ENCODE measurements at regions of chr7 and their contacts with region 1.

Region 1: DNA sequence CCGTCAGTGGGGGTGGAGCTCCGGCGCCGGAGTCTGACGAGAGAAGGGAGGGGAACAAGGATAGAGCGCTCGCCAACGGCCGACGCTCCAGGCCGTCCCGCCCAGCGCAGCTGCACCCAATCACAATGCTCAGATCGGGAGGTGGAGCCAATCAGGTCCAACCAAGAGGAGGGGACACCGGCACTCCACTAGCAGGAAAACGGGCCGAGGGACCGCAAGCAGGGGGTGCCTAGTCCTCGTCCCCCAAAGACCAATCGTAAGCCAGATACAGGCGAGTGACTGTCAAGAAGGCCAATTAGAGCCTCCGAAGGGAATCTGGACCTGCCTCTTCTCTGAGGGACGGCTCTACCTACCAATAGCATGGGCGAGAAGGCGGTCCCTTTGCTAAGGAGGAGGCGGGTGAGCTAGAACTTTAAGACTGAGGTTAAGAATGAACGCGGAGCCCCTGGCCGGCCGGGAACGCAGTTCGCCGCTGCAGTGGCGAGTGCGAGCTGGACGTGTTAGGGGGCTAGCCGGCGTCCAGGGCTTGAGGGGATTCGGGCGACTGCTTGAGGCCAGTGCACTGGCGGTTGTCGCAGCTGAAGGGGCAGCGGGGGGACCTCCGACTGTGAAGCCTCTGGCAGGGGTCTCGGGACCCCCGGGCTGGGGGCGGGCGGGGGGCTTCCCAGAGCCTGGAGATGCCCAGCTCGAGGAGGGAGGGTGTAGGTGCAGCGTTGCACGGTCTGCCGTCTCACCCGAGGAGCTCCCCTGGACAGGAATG is at the start of gene FBXO24:
- DNase-seq: peak; percentile 100
- H3K4me3 Mint-ChIP-seq: peak within 1 kb of the TSS; percentile 95
- H3K27ac Mint-ChIP-seq: peak within 1 kb of the TSS; percentile 97
- H3K4me1 Mint-ChIP-seq: peaks cover 30% of the 10 kb centered on the region
- H3K27me3 Mint-ChIP-seq: peaks cover 9% of the 10 kb centered on the region
- total RNA-seq, gene FBXO24: 1.8 to 2.7 TPM

Region 2: GRCh38 chr7:100478966-100479665 is 107.3 kb before region 1 on chr7 and contains the start of gene TSC22D4:
- CTCF ChIA-PET with region 1: interaction called, 4 read pairs
- POLR2A ChIA-PET with region 1: interaction called, 11 read pairs
- DNase-seq: peak; percentile 91
- H3K4me3 Mint-ChIP-seq: peak within 1 kb of the TSS; percentile 99
- H3K27ac Mint-ChIP-seq: peak within 1 kb of the TSS; percentile 93
- H3K4me1 Mint-ChIP-seq: peaks cover 40% of the 10 kb centered on the region
- H3K27me3 Mint-ChIP-seq: no peaks in the 10 kb centered on the region
- total RNA-seq, gene TSC22D4: 133 to 136 TPM

Region 3: GRCh38 chr7:100563809-100564400 is 22.5 kb before region 1 on chr7:
- CTCF ChIA-PET with region 1: interaction called, 16 read pairs
- POLR2A ChIA-PET with region 1: interaction called, 12 read pairs
- DNase-seq: peak; percentile 83
- H3K4me3 Mint-ChIP-seq: no peak overlapping the region
- H3K27ac Mint-ChIP-seq: peak overlapping the region; percentile 49
- H3K4me1 Mint-ChIP-seq: peaks cover 28% of the 10 kb centered on the region
- H3K27me3 Mint-ChIP-seq: no peaks in the 10 kb centered on the region

Region 4: GRCh38 chr7:100611974-100612729 is 25.7 kb after region 1 on chr7 and contains the start of gene MOSPD3:
- CTCF ChIA-PET with region 1: interaction called, 12 read pairs
- POLR2A ChIA-PET with region 1: interaction called, 89 read pairs
- DNase-seq: peak; percentile 98
- H3K4me3 Mint-ChIP-seq: peak within 1 kb of the TSS; percentile 95
- H3K27ac Mint-ChIP-seq: peak within 1 kb of the TSS; percentile 99
- H3K4me1 Mint-ChIP-seq: peaks cover 26% of the 10 kb centered on the region
- H3K27me3 Mint-ChIP-seq: peaks cover 2% of the 10 kb centered on the region
- total RNA-seq, gene MOSPD3: 47.2 to 53.3 TPM

Region 5: GRCh38 chr7:100673300-100673941 is 87.0 kb after region 1 on chr7 and contains the start of gene GNB2:
- CTCF ChIA-PET with region 1: interaction called, 3 read pairs
- POLR2A ChIA-PET with region 1: interaction called, 30 read pairs
- DNase-seq: peak; percentile 99
- H3K4me3 Mint-ChIP-seq: peak within 1 kb of the TSS; percentile 98
- H3K27ac Mint-ChIP-seq: peak within 1 kb of the TSS; percentile 93
- H3K4me1 Mint-ChIP-seq: peaks cover 21% of the 10 kb centered on the region
- H3K27me3 Mint-ChIP-seq: peaks cover 10% of the 10 kb centered on the region
- total RNA-seq, gene GNB2: 263 to 266 TPM

Region 6: DNA sequence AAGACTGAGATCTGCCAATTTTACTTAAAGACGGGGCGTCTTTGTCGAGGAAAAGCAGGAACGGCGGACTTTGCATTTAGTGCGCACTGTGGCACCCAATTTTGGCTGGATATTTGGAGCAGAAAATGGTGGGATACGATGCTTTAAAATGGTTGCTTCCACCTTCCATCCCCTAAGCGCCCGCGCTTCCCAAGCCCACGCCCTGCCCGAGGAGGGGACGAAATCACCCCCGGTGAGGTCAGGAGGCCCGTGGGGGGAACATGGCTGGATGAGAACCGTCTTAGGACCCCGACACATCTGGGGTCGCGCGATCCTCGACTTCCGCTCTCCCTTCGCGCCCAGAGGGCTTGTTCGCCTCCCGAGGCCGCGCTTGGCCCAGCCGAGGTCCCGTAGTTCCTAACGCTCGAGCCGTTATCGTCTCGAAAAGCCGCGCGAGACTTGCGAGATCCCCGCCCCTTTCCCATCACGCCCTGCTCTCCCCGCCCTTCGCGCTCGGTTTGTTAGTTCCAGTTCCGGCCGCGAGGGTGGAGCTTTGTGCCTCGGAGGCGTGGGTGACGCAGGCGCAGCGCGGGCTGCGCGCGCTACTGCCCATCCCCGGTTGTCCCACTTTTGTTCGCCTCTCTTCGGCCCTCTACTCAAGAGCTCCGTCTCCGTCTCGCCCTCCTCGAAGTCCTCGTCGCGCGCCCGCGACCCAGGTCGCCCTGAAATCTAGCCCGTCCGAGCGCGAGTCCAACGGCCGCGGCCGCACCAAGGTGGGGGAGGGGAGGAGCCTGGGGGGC is 288.3 kb after region 1 on chr7 and contains the start of gene SRRT:
- CTCF ChIA-PET with region 1: no interaction called
- POLR2A ChIA-PET with region 1: interaction called, 23 read pairs
- DNase-seq: peak; percentile 99
- H3K4me3 Mint-ChIP-seq: peak within 1 kb of the TSS; percentile 98
- H3K27ac Mint-ChIP-seq: peak within 1 kb of the TSS; percentile 97
- H3K4me1 Mint-ChIP-seq: peaks cover 60% of the 10 kb centered on the region
- H3K27me3 Mint-ChIP-seq: no peaks in the 10 kb centered on the region
- total RNA-seq, gene SRRT: 202 to 205 TPM